B cell (primary cell): ENCODE measurements at regions of chr1 and their contacts with region 1.

Region 1: DNA sequence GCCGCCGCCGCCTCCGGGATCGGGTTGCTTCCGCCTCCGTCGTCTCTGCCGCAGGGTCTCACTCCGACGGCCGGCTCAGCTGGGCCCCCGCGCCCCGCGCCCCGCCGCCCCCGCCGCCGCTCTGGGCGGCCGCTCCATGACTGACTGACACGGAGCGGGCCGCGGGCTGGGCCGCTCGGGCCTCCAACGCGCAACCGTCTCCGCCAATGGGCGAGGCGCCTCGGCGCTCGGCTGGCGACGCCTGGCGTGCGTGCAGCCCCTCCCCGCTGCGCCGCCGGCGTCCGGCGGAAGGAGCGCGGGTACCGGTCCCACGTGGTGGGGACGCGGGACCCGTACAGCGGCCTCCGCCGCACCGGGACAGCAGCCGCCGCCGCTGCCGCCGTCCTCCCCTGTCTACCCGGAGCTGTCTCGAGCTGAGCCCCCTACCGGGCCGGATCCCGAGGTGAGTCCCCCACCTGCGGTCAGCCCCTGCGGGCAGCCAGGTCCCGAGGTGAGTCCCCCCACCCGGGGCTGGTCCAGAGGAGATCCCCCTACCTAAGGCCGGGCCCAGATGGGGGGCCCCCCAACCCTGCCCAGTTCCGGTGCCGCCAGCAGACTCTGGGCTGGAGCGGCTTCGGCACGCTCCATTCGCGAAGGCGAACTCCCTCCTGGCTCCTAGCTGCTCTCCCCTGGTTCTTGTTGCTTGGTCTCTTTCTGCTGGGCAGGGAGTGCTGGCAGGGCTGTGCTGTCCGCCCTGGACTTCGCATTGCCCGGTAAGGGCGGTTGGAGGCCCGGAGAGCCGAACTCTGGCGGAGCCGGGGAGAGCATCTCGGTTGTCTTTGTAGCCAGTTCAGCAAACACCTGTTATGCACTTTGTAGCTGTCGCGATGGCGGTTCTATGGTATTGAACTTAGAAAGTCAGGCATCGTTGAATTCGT is at the starts of genes TAF5L and URB2:
- DNase-seq: peak; percentile 90
- ATAC-seq: peak; percentile 92
- H3K4me3 ChIP-seq: peak within 1 kb of the TSS; percentile 74 to 91 (median 86)
- H3K4me3 Mint-ChIP-seq: peak within 1 kb of the TSS; percentile 98
- H3K27ac ChIP-seq: peak within 1 kb of the TSS; percentile 58 to 82
- H3K27ac Mint-ChIP-seq: peak within 1 kb of the TSS; percentile 93
- H3K4me1 ChIP-seq: peaks cover 25 to 28% of the 10 kb centered on the region in 2 donors
- H3K4me1 Mint-ChIP-seq: peaks cover 48% of the 10 kb centered on the region
- H3K27me3 ChIP-seq: no peaks in the 10 kb centered on the region
- H3K27me3 Mint-ChIP-seq: no peaks in the 10 kb centered on the region
- CTCF ChIP-seq: no peak
- total RNA-seq, gene TAF5L: 21.2 and 24.0 TPM in 2 replicates
- total RNA-seq, gene URB2: 9.6 and 11.2 TPM in 2 replicates

Region 2: DNA sequence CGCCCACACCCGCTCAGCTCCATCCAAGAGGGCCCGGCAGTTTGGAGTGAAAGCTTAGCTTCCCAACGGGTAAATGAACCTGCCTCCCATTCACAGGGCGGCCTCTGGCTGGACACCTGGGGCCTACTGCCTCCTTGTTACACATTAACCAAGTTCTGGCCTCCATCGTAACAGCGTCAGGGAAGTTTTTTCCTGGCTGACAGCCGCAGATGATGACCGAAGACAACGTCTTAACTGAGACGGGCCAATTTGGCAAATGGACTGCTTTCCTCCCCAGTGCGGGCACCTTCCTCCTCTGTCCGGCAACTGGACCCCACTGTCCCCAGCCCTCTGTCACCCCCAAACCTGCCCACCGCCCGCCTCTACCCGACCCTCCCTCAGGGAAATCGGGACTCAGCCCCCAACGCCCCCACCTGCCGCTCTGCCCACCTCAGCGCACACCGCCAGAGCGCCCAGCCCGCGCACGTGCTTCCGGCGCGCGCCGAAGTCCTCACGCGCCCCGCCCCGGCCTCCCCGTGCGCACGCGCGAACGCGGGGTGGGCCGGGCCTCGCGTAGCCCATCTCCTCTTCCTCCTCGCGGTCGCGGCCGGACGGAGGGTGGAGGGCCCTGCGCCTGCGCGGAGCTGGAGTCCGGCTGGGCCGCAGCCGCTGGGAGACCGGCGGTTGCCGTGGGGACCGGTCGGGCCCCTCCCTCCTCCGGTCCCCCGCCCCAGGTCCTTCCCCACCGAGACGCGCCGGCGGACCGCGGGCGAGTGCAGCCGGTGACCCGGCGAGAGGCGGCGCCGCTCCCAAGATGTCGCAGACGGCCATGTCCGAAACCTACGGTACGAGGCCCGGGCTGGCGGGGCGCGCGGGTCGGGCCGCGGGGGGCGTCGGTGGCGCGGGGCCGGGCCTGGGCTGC is 355.4 kb before region 1 on chr1 and contains the start of gene RAB4A:
- CTCF ChIA-PET with region 1: no interaction called
- POLR2A ChIA-PET with region 1: no interaction called
- intact Hi-C with region 1: loop called (anchors 1 kb)
- DNase-seq: peak; percentile 90
- ATAC-seq: peak; percentile 90
- H3K4me3 ChIP-seq: peak within 1 kb of the TSS; percentile 59 to 89 (median 75)
- H3K4me3 Mint-ChIP-seq: peak within 1 kb of the TSS; percentile 96
- H3K27ac ChIP-seq: peak within 1 kb of the TSS; percentile 24 to 49
- H3K27ac Mint-ChIP-seq: peak within 1 kb of the TSS; percentile 85
- H3K4me1 ChIP-seq: peaks cover 16 to 22% of the 10 kb centered on the region in 2 donors
- H3K4me1 Mint-ChIP-seq: peaks cover 30% of the 10 kb centered on the region
- H3K27me3 ChIP-seq: no peaks in the 10 kb centered on the region
- H3K27me3 Mint-ChIP-seq: no peaks in the 10 kb centered on the region
- CTCF ChIP-seq: no peak
- total RNA-seq, gene RAB4A: 46.0 and 49.7 TPM in 2 replicates

Region 3: GRCh38 chr1:229507951-229508822 is 118.0 kb before region 1 on chr1 and contains the start of gene NUP133:
- CTCF ChIA-PET with region 1: no interaction called
- POLR2A ChIA-PET with region 1: no interaction called
- intact Hi-C with region 1: loop called (anchors 1 kb)
- DNase-seq: peak; percentile 99
- ATAC-seq: peak; percentile 95
- H3K4me3 ChIP-seq: peak within 1 kb of the TSS; percentile 87 to 99 (median 92)
- H3K4me3 Mint-ChIP-seq: peak within 1 kb of the TSS; percentile 96
- H3K27ac ChIP-seq: peak within 1 kb of the TSS; percentile 93 to 94
- H3K27ac Mint-ChIP-seq: peak within 1 kb of the TSS; percentile 99
- H3K4me1 ChIP-seq: peaks cover 14 to 17% of the 10 kb centered on the region in 2 donors
- H3K4me1 Mint-ChIP-seq: peaks cover 23% of the 10 kb centered on the region
- H3K27me3 ChIP-seq: no peaks in the 10 kb centered on the region
- H3K27me3 Mint-ChIP-seq: no peaks in the 10 kb centered on the region
- CTCF ChIP-seq: no peak
- total RNA-seq, gene NUP133: 49.7 and 50.5 TPM in 2 replicates

Region 4: GRCh38 chr1:229643996-229644745 is 18.0 kb after region 1 on chr1:
- CTCF ChIA-PET with region 1: no interaction called
- POLR2A ChIA-PET with region 1: no interaction called
- intact Hi-C with region 1: no loop called
- DNase-seq: peak; percentile 25
- ATAC-seq: no peak
- H3K4me3 ChIP-seq: no peak overlapping the region
- H3K4me3 Mint-ChIP-seq: no peak overlapping the region
- H3K27ac ChIP-seq: no peak overlapping the region
- H3K27ac Mint-ChIP-seq: peak overlapping the region; percentile 21
- H3K4me1 ChIP-seq: peaks cover 8 to 11% of the 10 kb centered on the region in 2 donors
- H3K4me1 Mint-ChIP-seq: peaks cover 16% of the 10 kb centered on the region
- H3K27me3 ChIP-seq: no peaks in the 10 kb centered on the region
- H3K27me3 Mint-ChIP-seq: no peaks in the 10 kb centered on the region
- CTCF ChIP-seq: no peak

Region 5: GRCh38 chr1:229756666-229757065 is 130.5 kb after region 1 on chr1:
- CTCF ChIA-PET with region 1: no interaction called
- POLR2A ChIA-PET with region 1: interaction called, 10 read pairs
- intact Hi-C with region 1: no loop called
- DNase-seq: no peak
- ATAC-seq: no peak
- H3K4me3 ChIP-seq: no peak overlapping the region
- H3K4me3 Mint-ChIP-seq: no peak overlapping the region
- H3K27ac ChIP-seq: no peak overlapping the region
- H3K27ac Mint-ChIP-seq: no peak overlapping the region
- H3K4me1 ChIP-seq: peaks cover 9 to 11% of the 10 kb centered on the region in 2 donors
- H3K4me1 Mint-ChIP-seq: peaks cover 10% of the 10 kb centered on the region
- H3K27me3 ChIP-seq: no peaks in the 10 kb centered on the region
- H3K27me3 Mint-ChIP-seq: peaks cover 3% of the 10 kb centered on the region
- CTCF ChIP-seq: no peak

Region 6: DNA sequence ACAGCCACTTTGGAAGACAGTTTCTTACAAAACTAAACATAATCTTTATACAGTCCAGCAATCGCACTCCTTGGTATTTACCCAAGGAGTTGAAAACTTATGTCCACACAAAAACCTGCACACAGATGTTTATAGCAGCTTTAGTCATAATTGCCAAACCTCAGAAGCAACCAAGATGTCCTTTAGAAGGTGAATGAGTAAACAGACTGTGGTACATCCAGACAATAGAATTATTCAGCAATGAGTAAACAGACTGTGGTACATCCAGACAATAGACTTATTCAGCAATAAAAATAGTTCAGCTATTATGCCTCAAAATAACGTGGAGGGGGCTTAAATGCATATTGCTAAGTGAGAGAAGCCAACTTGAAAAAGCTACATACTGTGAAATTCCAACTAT is 353.8 kb after region 1 on chr1:
- CTCF ChIA-PET with region 1: no interaction called
- POLR2A ChIA-PET with region 1: no interaction called
- intact Hi-C with region 1: no loop called
- DNase-seq: no peak
- ATAC-seq: no peak
- H3K4me3 ChIP-seq: no peak overlapping the region
- H3K4me3 Mint-ChIP-seq: no peak overlapping the region
- H3K27ac ChIP-seq: no peak overlapping the region
- H3K27ac Mint-ChIP-seq: no peak overlapping the region
- H3K4me1 ChIP-seq: no peaks in the 10 kb centered on the region
- H3K4me1 Mint-ChIP-seq: no peaks in the 10 kb centered on the region
- H3K27me3 ChIP-seq: peaks cover 0 to 3% (median 0%) of the 10 kb centered on the region in 4 experiments
- H3K27me3 Mint-ChIP-seq: peaks cover 20% of the 10 kb centered on the region
- CTCF ChIP-seq: no peak